ENCODE measurements at regions of chr13 and their contacts with region 1.

Region 1: DNA sequence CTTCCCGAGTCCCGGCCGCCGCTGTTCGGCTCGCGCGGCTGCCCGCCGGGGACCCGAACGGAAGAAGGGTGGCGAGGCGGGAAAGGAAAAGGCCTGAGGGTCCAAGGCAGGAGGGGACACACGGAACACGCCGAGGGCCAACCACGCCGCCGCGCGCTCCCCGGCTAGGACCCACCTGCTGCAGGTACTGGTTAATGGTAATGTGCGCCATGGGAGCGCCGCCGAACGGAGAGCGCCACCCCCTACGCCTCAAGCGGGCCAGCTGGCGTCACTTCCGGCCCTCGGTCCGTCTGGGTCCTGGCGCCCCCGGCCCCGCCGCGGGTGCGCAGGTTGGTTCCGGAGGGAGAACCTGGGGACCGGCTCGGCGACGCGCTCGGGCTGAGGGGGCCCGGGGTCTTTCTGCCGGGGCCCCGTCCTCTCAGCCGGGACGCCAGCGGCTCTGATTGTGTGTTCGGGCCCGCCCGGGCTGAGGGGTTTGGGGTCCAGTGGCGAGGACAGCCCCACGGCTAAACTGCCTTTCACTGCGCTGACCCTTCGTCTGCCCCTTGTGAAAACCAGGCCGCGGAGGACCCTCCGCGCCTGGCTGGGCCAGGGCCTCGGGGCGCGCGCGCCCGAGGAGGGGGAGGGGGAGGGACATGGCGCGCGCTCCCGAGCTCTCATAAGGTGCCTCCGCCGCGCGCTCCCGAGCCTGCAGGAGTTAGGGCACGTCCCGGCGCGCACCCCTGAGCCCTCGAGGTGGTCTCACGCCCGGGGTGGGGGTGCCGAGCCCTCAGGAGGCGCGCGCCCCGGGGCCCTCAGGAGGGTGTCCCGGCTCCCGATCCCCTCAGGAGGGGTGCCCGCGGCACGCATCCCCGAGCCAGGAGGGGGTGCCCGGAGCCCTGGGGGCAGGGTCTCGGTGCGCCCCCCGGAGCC is at the start of gene PCID2:
- DNase-seq: peak; percentile 89 to 94 (median 90)
- ATAC-seq: peak; percentile 65 to 87 (median 85)
- H3K4me3 ChIP-seq: peak within 1 kb of the TSS; percentile 76 to 99 (median 92)
- H3K27ac ChIP-seq: peak within 1 kb of the TSS; percentile 98 to 100 (median 99)
- H3K4me1 ChIP-seq: peaks cover 1 to 79% (median 61%) of the 10 kb centered on the region in 12 donors
- H3K27me3 ChIP-seq: no peaks in the 10 kb centered on the region
- CTCF ChIP-seq: peak in 2 of 12 donors; percentile 17 to 26
- POLR2A ChIP-seq: peak in 1 of 2 donors; percentile 69
- total RNA-seq, gene PCID2: 40.1 to 60.2 (median 45.2) TPM

Region 2: DNA sequence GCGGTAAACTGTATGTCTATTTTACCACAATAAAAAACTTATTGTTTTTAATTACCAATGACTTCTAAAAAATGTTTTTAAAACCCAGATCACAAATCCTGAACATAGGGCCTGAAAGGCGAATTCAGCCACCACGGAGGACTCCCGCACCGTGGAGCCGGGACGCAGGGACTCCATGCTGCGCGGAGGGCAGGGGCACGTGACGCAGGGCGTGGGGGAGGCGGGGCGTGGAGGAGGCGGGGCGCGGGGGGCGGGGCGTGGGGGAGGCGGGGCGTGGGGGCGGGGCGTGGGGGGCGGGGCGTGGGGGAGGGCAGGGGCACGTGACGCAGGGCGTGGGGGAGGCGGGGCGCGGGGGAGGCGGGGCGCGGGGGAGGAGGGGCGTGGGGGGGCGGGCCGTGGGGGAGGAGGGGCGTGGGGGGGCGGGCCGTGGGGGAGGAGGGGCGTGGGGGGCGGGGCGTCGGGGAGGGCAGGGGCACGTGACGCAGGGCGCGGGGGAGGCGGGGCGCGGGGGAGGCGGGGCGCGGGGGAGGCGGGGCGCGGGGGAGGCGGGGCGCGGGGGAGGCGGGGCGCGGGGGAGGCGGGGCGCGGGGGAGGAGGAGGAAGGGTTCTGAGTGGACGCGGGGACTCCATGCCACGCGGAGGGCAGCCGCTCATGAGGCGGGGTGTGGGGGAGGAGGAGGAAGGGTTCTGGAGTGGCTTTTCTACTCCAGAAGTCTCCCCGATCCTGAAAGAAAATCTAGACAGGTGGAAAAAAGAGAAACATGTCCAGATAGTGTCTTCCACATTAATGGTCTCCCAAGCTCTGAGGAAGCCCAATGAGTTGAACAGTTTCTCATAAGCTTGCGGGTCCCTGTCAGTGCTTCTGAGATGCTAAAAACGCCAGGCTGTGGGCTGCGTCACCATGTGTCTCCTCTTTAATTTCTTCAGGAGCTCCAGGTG is 54.6 kb before region 1 on chr13:
- intact Hi-C with region 1: loop called in 5 of 10 experiments (anchors 2 to 10 kb)
- DNase-seq: peak; percentile 83 to 91 (median 85)
- ATAC-seq: peak; percentile 71 to 89 (median 80)
- H3K4me3 ChIP-seq: peak overlapping the region; percentile 31 to 68 (median 53)
- H3K27ac ChIP-seq: peak overlapping the region; percentile 58 to 95 (median 88)
- H3K4me1 ChIP-seq: peaks cover 3 to 24% (median 14%) of the 10 kb centered on the region in 12 donors
- H3K27me3 ChIP-seq: peaks cover 0 to 7% (median 0%) of the 10 kb centered on the region in 9 donors
- CTCF ChIP-seq: peak in 1 of 12 donors; percentile 14
- POLR2A ChIP-seq: peak in 1 of 2 donors; percentile 40